ENCODE measurements at regions of chr2 and their contacts with region 1.

Region 1: GRCh38 chr2:202660796-202661195 is 26.0 kb downstream of the FAM117B start:
- DNase-seq: no peak
- ATAC-seq: no peak
- H3K4me3 ChIP-seq: no peak overlapping the region
- H3K4me3 Mint-ChIP-seq: no peak overlapping the region
- H3K27ac ChIP-seq: no peak overlapping the region
- H3K27ac Mint-ChIP-seq: peak overlapping the region; percentile 38 to 68
- H3K4me1 ChIP-seq: peaks cover 32 to 39% of the 10 kb centered on the region in 2 experiments
- H3K4me1 Mint-ChIP-seq: peaks cover 81 to 90% (median 82%) of the 10 kb centered on the region in 3 donors
- H3K27me3 ChIP-seq: no peaks in the 10 kb centered on the region
- H3K27me3 Mint-ChIP-seq: no peaks in the 10 kb centered on the region

Region 2: DNA sequence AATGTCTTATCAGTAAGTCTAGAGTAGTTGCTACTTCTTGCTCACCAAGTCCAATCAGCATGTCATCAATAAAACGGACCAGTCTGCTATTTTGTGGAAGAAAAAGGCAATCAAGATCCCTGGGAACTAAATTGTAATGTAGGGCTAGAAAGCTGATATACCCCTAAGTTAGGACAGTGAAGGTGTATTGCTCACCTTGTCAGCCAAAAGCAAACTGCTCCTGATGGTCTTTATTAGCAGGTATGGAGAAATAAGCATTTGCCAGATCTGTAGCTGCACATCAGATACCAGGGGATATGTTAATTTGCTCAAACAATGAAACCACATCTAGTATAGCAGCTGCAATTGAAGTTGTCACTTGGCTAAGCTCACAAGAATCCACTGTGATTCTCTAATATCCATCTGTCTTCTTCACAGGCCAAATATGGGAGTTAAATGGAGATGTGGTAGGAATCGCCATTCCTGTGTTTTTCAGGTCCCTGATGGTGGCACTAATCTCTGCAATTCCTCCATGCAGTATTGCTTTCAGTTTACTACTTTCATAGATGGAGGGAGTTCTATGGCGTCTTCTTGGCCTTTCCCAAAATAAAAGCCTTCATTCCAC is 1092.5 kb before region 1 on chr2:
- CTCF ChIA-PET with region 1: no interaction called
- POLR2A ChIA-PET with region 1: no interaction called
- DNase-seq: no peak
- ATAC-seq: no peak
- H3K4me3 ChIP-seq: no peak overlapping the region
- H3K4me3 Mint-ChIP-seq: no peak overlapping the region
- H3K27ac ChIP-seq: no peak overlapping the region
- H3K27ac Mint-ChIP-seq: no peak overlapping the region
- H3K4me1 ChIP-seq: no peaks in the 10 kb centered on the region
- H3K4me1 Mint-ChIP-seq: peaks cover 0 to 4% (median 0%) of the 10 kb centered on the region in 3 donors
- H3K27me3 ChIP-seq: no peaks in the 10 kb centered on the region
- H3K27me3 Mint-ChIP-seq: no peaks in the 10 kb centered on the region

Region 3: DNA sequence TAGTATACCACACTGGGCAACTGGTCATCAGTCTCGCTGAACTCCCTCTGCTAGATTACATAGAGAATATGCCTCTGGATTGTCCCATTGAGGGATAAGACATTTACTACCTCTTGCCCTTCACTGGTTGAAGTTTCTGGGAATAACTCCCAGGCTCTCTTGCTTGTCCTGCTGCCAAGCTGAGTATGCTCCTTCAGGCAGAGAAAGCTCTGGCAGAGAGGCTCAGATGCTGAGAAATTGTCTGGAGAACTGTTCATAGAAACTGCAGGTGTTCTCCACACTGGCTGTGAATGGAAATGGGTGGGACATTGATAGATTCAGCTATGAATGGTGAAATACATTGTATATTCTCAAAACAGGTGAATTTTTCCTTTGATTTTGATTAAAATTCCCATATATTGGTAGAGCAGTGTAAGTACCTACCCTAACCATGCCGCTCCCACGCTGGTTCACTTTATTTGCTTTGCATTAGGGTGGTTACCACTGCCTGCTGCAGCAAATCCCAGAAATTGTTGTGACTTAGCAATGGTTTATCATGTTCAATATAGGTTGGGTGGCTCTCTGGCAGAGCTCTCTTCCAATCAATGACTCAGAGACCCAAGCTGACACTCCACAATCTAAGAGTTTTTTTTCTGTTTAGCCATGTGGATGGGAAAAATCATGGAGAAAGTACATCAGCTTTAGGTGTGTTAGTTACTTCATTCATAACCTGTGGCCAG is 10.7 kb after region 1 on chr2:
- CTCF ChIA-PET with region 1: interaction called, 3 read pairs
- POLR2A ChIA-PET with region 1: interaction called in 1 of 2 experiments, 12 read pairs
- DNase-seq: no peak
- ATAC-seq: no peak
- H3K4me3 ChIP-seq: no peak overlapping the region
- H3K4me3 Mint-ChIP-seq: peak overlapping the region in 1 of 3 donors; percentile 66
- H3K27ac ChIP-seq: no peak overlapping the region
- H3K27ac Mint-ChIP-seq: peak overlapping the region in 1 of 2 donors; percentile 48
- H3K4me1 ChIP-seq: peaks cover 39 to 49% of the 10 kb centered on the region in 2 experiments
- H3K4me1 Mint-ChIP-seq: peaks cover 74 to 78% (median 76%) of the 10 kb centered on the region in 3 donors
- H3K27me3 ChIP-seq: no peaks in the 10 kb centered on the region
- H3K27me3 Mint-ChIP-seq: no peaks in the 10 kb centered on the region

Region 4: DNA sequence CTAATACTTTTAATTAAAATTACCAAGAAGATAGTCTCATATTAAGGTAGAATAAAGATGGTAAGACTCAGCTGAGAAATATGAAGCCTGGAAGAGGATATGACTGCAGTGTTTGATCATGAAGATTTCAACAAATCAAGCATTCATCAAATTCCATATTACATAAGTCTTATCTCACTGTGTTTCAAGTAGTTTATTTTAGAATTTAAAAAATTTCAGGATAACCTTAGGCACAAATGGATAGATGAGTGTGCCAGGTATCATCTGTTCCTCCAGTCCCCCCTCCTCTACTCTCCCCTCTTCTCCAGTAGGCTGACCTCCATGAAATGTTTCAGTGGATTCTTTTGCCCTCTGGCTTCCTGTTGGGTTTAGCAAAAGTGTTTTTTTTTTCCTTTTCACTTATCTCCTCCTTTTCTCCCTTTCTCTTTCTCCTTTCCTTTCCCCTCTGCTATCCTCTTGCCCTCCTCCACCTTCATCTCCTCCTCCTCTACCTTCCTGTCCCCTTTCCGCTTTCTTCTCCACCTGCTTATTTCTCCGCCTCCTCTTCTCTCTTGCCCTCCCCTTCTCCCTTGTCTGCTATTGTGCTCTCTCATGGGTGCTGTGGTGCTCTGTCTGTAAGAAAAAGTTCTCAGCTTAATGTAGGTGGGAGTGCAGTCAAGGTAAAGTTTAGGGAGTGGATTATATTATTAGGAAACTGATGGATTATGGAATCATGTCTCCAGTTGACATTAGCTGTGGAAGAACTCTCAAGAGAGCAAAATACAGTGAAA is 740.2 kb after region 1 on chr2:
- CTCF ChIA-PET with region 1: no interaction called
- POLR2A ChIA-PET with region 1: interaction called in 1 of 2 experiments, 11 read pairs
- DNase-seq: no peak
- ATAC-seq: no peak
- H3K4me3 ChIP-seq: no peak overlapping the region
- H3K4me3 Mint-ChIP-seq: no peak overlapping the region
- H3K27ac ChIP-seq: no peak overlapping the region
- H3K27ac Mint-ChIP-seq: no peak overlapping the region
- H3K4me1 ChIP-seq: no peaks in the 10 kb centered on the region
- H3K4me1 Mint-ChIP-seq: no peaks in the 10 kb centered on the region
- H3K27me3 ChIP-seq: no peaks in the 10 kb centered on the region
- H3K27me3 Mint-ChIP-seq: no peaks in the 10 kb centered on the region

Measured in T-cell (primary cell).